Activated naive CD4-positive, alpha-beta T cell treated with anti-CD3 and anti-CD28 coated beads for 36 hours (primary cell): ENCODE measurements at regions of chr5 and their contacts with region 1.

Region 1: GRCh38 chr5:90932052-90932699 is 373.6 kb downstream of the ADGRV1 start:
- DNase-seq: peak; percentile 65
- H3K4me3 Mint-ChIP-seq: no peak overlapping the region
- H3K27ac Mint-ChIP-seq: no peak overlapping the region
- H3K4me1 Mint-ChIP-seq: peaks cover 5% of the 10 kb centered on the region
- H3K27me3 Mint-ChIP-seq: peaks cover 8% of the 10 kb centered on the region

Region 2: DNA sequence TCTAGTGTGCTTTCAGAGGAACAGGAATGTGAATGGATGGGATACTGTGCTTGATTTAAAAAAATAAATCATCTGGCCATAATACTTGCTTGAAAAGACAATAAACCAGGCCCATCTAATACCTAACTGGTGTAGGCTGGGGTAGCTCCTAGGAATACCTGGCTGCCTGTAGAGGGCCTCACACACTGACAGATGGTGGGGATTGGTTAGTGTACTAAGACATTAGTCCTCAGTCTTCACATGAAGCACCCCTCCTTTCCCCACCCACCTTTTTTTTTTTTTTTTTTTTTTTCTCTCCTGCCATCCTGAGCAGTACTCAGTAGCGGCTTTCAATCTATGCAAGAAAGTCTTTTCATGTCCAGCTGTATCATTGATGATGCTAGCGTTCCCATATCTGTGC is 243.1 kb before region 1 on chr5:
- CTCF ChIA-PET with region 1: no interaction called
- intact Hi-C with region 1: no loop called
- DNase-seq: no peak
- H3K4me3 Mint-ChIP-seq: no peak overlapping the region
- H3K27ac Mint-ChIP-seq: no peak overlapping the region
- H3K4me1 Mint-ChIP-seq: no peaks in the 10 kb centered on the region
- H3K27me3 Mint-ChIP-seq: no peaks in the 10 kb centered on the region

Region 3: DNA sequence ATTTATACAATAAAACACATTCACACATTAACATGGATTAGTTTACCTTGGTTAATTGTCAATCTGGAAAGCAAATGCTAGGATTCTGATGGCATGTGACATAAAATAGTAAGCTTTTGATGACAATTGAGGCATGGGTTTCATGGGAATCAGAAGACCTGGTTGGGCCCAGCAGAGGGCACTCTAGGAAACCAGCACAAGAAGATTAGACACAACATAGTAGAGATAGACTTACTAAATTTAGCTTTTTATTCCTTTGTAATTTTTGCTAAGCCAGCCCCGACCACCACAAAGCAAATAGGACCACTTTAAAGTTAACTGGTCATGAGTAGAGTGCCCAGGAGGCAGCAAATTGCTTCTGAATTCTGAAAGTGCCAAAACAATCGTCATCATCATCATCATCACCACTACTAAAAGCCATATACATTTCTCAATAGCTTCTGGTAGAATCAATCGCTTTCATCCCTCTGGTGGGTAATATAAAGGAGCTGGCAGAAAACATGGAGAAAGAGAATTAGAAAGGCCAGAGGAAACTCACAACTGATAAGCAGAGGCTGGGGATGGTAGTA is 287.7 kb after region 1 on chr5:
- CTCF ChIA-PET with region 1: interaction called, 6 read pairs
- intact Hi-C with region 1: loop called (anchors 1 kb)
- DNase-seq: peak; percentile 59
- H3K4me3 Mint-ChIP-seq: no peak overlapping the region
- H3K27ac Mint-ChIP-seq: no peak overlapping the region
- H3K4me1 Mint-ChIP-seq: no peaks in the 10 kb centered on the region
- H3K27me3 Mint-ChIP-seq: no peaks in the 10 kb centered on the region

Region 4: GRCh38 chr5:91225848-91226686 is 293.9 kb after region 1 on chr5:
- CTCF ChIA-PET with region 1: interaction called, 6 read pairs
- intact Hi-C with region 1: loop called (anchors 2 kb)
- DNase-seq: peak; percentile 80
- H3K4me3 Mint-ChIP-seq: no peak overlapping the region
- H3K27ac Mint-ChIP-seq: no peak overlapping the region
- H3K4me1 Mint-ChIP-seq: peaks cover 4% of the 10 kb centered on the region
- H3K27me3 Mint-ChIP-seq: no peaks in the 10 kb centered on the region